ENCODE measurements at regions of chr15 and their contacts with region 1.

Region 1: DNA sequence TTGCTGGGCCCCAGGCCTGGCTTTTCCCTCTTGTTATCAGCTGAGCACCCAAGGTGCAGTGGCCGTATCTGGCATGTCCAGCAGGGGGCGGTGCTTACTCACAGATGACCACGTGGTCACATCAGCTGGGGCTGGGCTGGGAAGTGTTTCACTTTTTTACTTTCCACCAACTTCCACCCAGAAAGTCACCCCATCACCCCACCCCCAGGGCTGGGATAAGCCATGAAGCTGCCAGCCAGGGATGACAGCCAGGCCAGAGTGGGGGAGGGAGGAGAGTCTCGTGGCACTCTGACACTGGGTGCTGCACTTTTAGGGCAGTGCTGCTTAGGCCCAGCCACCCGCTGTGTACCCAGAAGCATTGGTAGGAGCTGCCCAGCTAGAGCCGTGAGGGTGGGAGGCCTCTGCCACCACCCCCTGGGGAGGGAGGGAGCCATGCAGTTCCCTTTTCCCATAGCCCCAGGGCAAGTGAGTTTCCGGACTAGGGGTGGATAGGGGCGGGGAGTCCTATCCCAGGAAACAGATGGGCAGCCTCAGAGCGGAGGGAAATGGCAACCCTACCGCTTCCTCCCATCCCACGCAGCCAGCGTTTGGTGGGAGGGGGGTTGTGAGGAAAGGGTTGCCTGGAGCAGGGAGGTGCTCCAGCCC is 6.1 kb downstream of the PPCDC start:
- DNase-seq: peak; percentile 98

Region 2: GRCh38 chr15:75302318-75302717 is 272.8 kb after region 1 on chr15:
- intact Hi-C with region 1: loop called in 1 of 2 experiments (anchors 5 kb)
- DNase-seq: no peak